Left lung (tissue), 14 donors: ENCODE measurements at regions of chr3 and their contacts with region 1.

Region 1: GRCh38 chr3:127652231-127652995 is 20.3 kb upstream of the ABTB1 start:
- DNase-seq: peak in 1 of 4 donors; percentile 66
- ATAC-seq: peak; percentile 94
- H3K4me3 ChIP-seq: no peak overlapping the region
- H3K27ac ChIP-seq: no peak overlapping the region
- H3K4me1 ChIP-seq: no peaks in the 10 kb centered on the region
- H3K27me3 ChIP-seq: no peaks in the 10 kb centered on the region
- CTCF ChIP-seq: peak; percentile 89 to 92

Region 2: DNA sequence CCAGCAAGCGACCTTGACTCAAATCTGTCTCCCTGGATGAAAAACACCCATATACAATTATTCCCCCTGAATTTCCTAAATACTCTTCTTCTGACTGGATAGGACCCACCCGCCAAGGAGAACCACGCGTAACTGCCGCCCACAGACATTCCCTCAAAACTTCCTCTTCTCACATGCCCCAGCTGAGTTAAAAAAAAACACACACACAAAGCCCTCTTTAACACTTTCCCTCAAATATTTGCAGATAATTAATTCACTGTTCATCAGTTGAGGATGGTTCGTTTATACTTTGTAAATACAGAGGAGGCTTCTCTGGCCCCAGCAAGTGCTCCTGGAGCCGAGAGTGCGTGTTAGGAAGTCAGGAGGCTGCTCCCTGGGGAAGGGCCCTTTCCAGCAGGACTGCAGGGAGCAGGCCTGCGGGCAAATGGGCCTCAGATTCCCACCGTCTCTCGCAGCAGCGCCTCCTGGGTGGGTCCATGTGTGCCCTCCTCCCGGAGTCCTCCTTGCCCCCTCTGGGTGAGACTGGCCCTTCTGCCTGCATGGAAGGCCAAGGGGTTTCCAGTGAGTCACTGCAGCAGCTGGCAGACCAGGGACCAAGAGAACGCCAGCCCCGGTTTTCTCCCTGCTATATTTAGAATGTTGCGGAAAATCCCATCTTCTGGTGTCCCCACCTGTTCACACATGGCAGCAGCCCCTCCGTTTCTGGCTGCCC is 123.1 kb after region 1 on chr3:
- intact Hi-C with region 1: no loop called
- DNase-seq: no peak
- ATAC-seq: peak; percentile 32
- H3K4me3 ChIP-seq: no peak overlapping the region
- H3K27ac ChIP-seq: peak overlapping the region; percentile 41 to 74
- H3K4me1 ChIP-seq: peaks cover 14 to 87% of the 10 kb centered on the region in 2 donors
- H3K27me3 ChIP-seq: no peaks in the 10 kb centered on the region
- CTCF ChIP-seq: no peak

Region 3: DNA sequence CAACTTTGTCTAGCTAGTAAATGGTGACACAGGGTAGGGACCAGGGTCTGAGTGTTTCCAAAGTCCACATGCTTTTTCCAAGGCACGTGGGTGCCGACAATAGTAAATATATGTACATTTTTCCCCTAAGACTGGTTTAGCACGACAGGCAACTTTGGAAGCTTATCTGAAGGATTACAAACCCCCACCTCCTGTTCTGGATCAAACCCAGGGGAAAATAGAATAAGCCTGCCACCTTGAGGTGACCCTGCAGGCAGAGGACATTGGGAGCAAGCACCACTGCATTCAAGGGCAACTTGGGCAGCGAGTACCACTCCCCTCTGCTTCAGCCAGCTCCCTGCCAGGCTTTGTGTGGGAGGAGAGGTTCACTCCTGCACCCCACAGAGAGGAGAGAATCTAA is 307.4 kb after region 1 on chr3:
- intact Hi-C with region 1: no loop called
- DNase-seq: peak in 2 of 4 donors; percentile 42 to 78
- ATAC-seq: peak; percentile 69
- H3K4me3 ChIP-seq: no peak overlapping the region
- H3K27ac ChIP-seq: no peak overlapping the region
- H3K4me1 ChIP-seq: no peaks in the 10 kb centered on the region
- H3K27me3 ChIP-seq: no peaks in the 10 kb centered on the region
- CTCF ChIP-seq: peak; percentile 13 to 37

Region 4: DNA sequence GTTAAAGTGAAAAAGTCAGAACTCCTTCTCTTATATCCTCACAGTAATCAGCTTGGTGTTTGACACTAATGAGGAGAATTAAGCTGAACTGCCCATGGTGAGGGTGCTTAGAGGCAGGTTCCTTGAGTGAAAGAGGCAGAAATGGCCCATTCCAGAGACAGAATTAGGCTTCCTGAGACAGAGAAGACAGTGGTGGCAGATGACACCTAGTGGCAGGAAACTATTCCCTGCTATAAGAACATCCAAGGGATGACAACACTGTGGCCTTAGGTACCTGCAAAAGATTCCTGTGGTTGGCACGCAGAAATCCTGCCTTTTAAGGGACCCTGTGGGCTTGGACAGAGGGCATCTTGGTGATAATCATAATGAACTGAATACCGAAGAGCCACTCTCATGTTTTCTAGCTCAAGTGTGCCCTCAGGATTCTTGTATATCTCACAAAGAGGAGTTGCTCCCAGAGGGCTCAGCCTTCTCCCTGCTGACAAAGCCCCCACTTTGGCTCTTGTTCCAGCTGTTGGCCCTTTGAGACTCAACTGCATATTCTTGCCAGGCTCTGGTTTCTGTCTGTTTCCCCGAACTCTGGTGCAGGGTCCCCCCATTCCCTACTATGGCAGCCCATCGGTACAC is 318.7 kb after region 1 on chr3:
- intact Hi-C with region 1: loop called in 1 of 2 experiments (anchors 5 kb)
- DNase-seq: peak in 2 of 4 donors; percentile 4 to 54
- ATAC-seq: peak; percentile 82
- H3K4me3 ChIP-seq: no peak overlapping the region
- H3K27ac ChIP-seq: no peak overlapping the region
- H3K4me1 ChIP-seq: no peaks in the 10 kb centered on the region
- H3K27me3 ChIP-seq: peaks cover 2 to 6% of the 10 kb centered on the region in 2 donors
- CTCF ChIP-seq: peak; percentile 55 to 57

Region 5: GRCh38 chr3:128194843-128195242 is 542.4 kb after region 1 on chr3:
- intact Hi-C with region 1: no loop called
- DNase-seq: peak in 1 of 4 donors; percentile 58
- ATAC-seq: peak; percentile 56
- H3K4me3 ChIP-seq: no peak overlapping the region
- H3K27ac ChIP-seq: no peak overlapping the region
- H3K4me1 ChIP-seq: peaks cover 0 to 4% of the 10 kb centered on the region in 2 donors
- H3K27me3 ChIP-seq: no peaks in the 10 kb centered on the region
- CTCF ChIP-seq: no peak